Activated CD4-positive, alpha-beta T cell treated with anti-CD3 and anti-CD28 coated beads for 36 hours (primary cell): ENCODE measurements at regions of chr20 and their contacts with region 1.

Region 1: GRCh38 chr20:25076731-25077609 is 5.0 kb downstream of the VSX1 start:
- DNase-seq: peak; percentile 61
- ATAC-seq: peak; percentile 62
- H3K4me3 Mint-ChIP-seq: peak overlapping the region; percentile 32
- H3K27ac Mint-ChIP-seq: no peak overlapping the region
- H3K4me1 Mint-ChIP-seq: peaks cover 14% of the 10 kb centered on the region
- H3K27me3 Mint-ChIP-seq: peaks cover 59% of the 10 kb centered on the region

Region 2: GRCh38 chr20:24785141-24786125 is 291.5 kb before region 1 on chr20:
- CTCF ChIA-PET with region 1: no interaction called
- POLR2A ChIA-PET with region 1: no interaction called
- intact Hi-C with region 1: no loop called
- DNase-seq: no peak
- ATAC-seq: no peak
- H3K4me3 Mint-ChIP-seq: no peak overlapping the region
- H3K27ac Mint-ChIP-seq: no peak overlapping the region
- H3K4me1 Mint-ChIP-seq: no peaks in the 10 kb centered on the region
- H3K27me3 Mint-ChIP-seq: no peaks in the 10 kb centered on the region

Region 3: GRCh38 chr20:25097498-25097897 is 20.5 kb after region 1 on chr20:
- CTCF ChIA-PET with region 1: no interaction called
- POLR2A ChIA-PET with region 1: no interaction called
- intact Hi-C with region 1: loop called in 1 of 2 experiments (anchors 2 kb)
- DNase-seq: no peak
- ATAC-seq: no peak
- H3K4me3 Mint-ChIP-seq: no peak overlapping the region
- H3K27ac Mint-ChIP-seq: no peak overlapping the region
- H3K4me1 Mint-ChIP-seq: peaks cover 10% of the 10 kb centered on the region
- H3K27me3 Mint-ChIP-seq: no peaks in the 10 kb centered on the region

Region 4: GRCh38 chr20:25160467-25160866 is 83.5 kb after region 1 on chr20:
- CTCF ChIA-PET with region 1: no interaction called
- POLR2A ChIA-PET with region 1: no interaction called
- intact Hi-C with region 1: loop called in 1 of 2 experiments (anchors 5 kb)
- DNase-seq: no peak
- ATAC-seq: peak; percentile 93
- H3K4me3 Mint-ChIP-seq: no peak overlapping the region
- H3K27ac Mint-ChIP-seq: peak overlapping the region; percentile 69
- H3K4me1 Mint-ChIP-seq: peaks cover 13% of the 10 kb centered on the region
- H3K27me3 Mint-ChIP-seq: no peaks in the 10 kb centered on the region

Region 5: GRCh38 chr20:26208296-26209091 is 1131.5 kb after region 1 on chr20:
- CTCF ChIA-PET with region 1: no interaction called
- POLR2A ChIA-PET with region 1: no interaction called
- intact Hi-C with region 1: loop called in 1 of 2 experiments (anchors 5 kb)
- DNase-seq: peak; percentile 47
- ATAC-seq: peak; percentile 55
- H3K4me3 Mint-ChIP-seq: no peak overlapping the region
- H3K27ac Mint-ChIP-seq: no peak overlapping the region
- H3K4me1 Mint-ChIP-seq: peaks cover 7% of the 10 kb centered on the region
- H3K27me3 Mint-ChIP-seq: peaks cover 20% of the 10 kb centered on the region